Testis (tissue), 5 donors: ENCODE measurements at regions of chr2 and their contacts with region 1.

Region 1: DNA sequence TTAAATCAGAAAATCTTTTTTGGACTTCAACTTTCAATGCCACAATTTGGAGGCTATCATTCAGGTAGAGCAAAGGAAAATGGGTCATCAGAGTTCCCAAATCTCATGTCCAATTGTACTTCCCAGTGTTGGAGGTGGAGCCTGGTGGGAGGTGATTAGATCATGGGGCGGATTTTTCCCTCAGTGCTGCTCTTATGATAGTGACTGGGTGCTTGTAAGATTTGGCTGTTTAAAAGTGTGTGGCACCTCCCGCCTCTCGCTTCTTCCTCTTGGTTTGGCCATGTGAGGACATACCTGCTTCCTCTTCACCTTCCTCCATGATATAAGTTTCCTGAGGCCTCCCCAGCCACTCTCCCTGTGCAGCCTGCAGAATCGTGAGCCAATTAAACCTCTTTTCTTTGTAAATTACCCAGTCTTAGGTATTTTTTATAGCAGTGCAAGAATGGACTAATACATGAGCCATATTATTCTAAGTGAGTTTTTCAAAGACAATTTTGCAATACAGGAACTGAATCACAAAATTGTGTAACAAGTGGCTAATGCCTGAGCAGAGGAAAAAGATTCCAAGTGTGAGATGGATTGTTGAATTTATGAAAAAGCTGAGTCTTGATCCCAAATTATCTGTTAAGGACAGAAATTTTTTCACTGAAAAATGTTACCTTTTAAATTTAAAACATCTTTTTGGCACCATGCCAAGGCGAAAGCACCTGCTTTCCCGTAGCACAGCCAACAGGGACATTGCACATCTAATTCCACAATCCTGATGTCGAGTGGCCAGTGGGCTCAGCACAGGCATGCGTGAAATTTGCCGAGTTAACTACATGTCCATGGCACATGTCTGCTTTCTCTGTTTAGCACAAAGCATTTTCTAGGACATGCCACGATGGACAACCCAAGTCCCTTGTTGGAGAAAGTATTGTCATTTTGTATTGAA is 150.9 kb downstream of the COL6A3 start:
- DNase-seq: no peak
- H3K4me3 ChIP-seq: no peak overlapping the region
- H3K27ac ChIP-seq: no peak overlapping the region
- H3K4me1 ChIP-seq: no peaks in the 10 kb centered on the region
- H3K27me3 ChIP-seq: no peaks in the 10 kb centered on the region
- CTCF ChIP-seq: no peak
- POLR2A ChIP-seq: no peak

Region 2: GRCh38 chr2:236679884-236680860 is 582.9 kb before region 1 on chr2:
- intact Hi-C with region 1: no loop called
- DNase-seq: no peak
- H3K4me3 ChIP-seq: no peak overlapping the region
- H3K27ac ChIP-seq: no peak overlapping the region
- H3K4me1 ChIP-seq: no peaks in the 10 kb centered on the region
- H3K27me3 ChIP-seq: no peaks in the 10 kb centered on the region
- CTCF ChIP-seq: no peak
- POLR2A ChIP-seq: no peak

Region 3: GRCh38 chr2:237184192-237184926 is 78.7 kb before region 1 on chr2:
- intact Hi-C with region 1: no loop called
- DNase-seq: peak; percentile 10
- H3K4me3 ChIP-seq: no peak overlapping the region
- H3K27ac ChIP-seq: no peak overlapping the region
- H3K4me1 ChIP-seq: peaks cover 9% of the 10 kb centered on the region
- H3K27me3 ChIP-seq: no peaks in the 10 kb centered on the region
- CTCF ChIP-seq: no peak
- POLR2A ChIP-seq: no peak

Region 4: GRCh38 chr2:237312024-237312755 is 49.1 kb after region 1 on chr2:
- intact Hi-C with region 1: loop called (anchors 2 kb)
- DNase-seq: no peak
- H3K4me3 ChIP-seq: no peak overlapping the region
- H3K27ac ChIP-seq: no peak overlapping the region
- H3K4me1 ChIP-seq: peaks cover 26% of the 10 kb centered on the region
- H3K27me3 ChIP-seq: no peaks in the 10 kb centered on the region
- CTCF ChIP-seq: no peak
- POLR2A ChIP-seq: no peak